Calu3 (cell line): ENCODE measurements at regions of chr10 and their contacts with region 1.

Region 1: GRCh38 chr10:75261813-75262708 is 26.3 kb upstream of the COMTD1 start:
- DNase-seq: no peak
- H3K4me3 Mint-ChIP-seq: peak overlapping the region; percentile 60
- H3K27ac Mint-ChIP-seq: peak overlapping the region; percentile 80
- H3K4me1 Mint-ChIP-seq: peaks cover 34% of the 10 kb centered on the region
- H3K27me3 Mint-ChIP-seq: no peaks in the 10 kb centered on the region
- CTCF ChIP-seq: no peak

Region 2: GRCh38 chr10:75272896-75273295 is 10.8 kb after region 1 on chr10:
- CTCF ChIA-PET with region 1: no interaction called
- intact Hi-C with region 1: no loop called
- DNase-seq: peak; percentile 37
- H3K4me3 Mint-ChIP-seq: no peak overlapping the region
- H3K27ac Mint-ChIP-seq: no peak overlapping the region
- H3K4me1 Mint-ChIP-seq: peaks cover 14% of the 10 kb centered on the region
- H3K27me3 Mint-ChIP-seq: no peaks in the 10 kb centered on the region
- CTCF ChIP-seq: no peak

Region 3: DNA sequence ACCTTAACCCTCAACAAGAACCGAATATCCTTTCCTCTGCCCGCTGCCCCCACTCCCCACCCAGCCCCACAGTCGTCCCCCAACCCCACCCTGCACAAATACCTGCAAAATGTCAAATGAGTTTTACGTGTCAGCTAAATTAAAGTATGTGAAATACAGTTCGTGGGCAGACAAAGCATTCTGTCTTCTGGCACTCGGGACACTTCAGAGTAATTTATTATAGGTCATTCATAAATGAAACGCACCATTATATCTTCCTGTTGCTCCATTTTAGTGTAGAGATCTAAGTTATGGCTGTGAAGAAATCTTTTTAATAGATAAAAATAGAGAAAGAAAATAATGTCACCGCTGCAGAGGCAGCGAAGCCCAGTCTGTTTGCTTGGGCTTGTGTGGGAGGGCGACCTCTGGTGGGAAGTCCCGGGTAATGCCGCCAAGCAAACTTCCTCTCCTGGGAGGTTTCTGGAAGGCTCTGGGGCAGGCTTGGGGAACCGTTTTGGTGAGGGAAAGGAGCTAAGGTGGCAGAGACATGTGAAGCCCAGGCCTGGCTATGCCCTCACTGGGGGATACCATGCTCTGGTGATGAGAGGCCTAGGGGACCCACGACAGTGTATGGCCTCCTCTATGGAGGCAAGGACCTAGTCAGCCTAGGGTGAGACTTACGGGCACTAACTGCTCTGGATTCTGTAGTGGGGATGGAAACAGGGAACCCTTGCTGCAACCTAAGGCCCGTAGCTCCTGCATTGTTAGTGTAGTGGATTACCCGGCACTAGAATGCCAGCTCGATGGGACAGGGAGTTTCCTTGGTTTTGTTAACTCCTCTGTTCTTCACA is 774.3 kb after region 1 on chr10:
- CTCF ChIA-PET with region 1: no interaction called
- intact Hi-C with region 1: loop called (anchors 10 kb)
- DNase-seq: peak; percentile 87
- H3K4me3 Mint-ChIP-seq: no peak overlapping the region
- H3K27ac Mint-ChIP-seq: no peak overlapping the region
- H3K4me1 Mint-ChIP-seq: peaks cover 20% of the 10 kb centered on the region
- H3K27me3 Mint-ChIP-seq: no peaks in the 10 kb centered on the region
- CTCF ChIP-seq: peak; percentile 92